Activated CD4-positive, alpha-beta T cell treated with anti-CD3 and anti-CD28 coated beads for 36 hours (primary cell): ENCODE measurements at regions of chr19 and their contacts with region 1.

Region 1: GRCh38 chr19:31349160-31349881 is at the start of gene TSHZ3:
- DNase-seq: peak; percentile 71
- ATAC-seq: peak; percentile 48
- H3K4me3 Mint-ChIP-seq: peak within 1 kb of the TSS; percentile 70
- H3K27ac Mint-ChIP-seq: no peak within 1 kb of the TSS
- H3K4me1 Mint-ChIP-seq: peaks cover 31% of the 10 kb centered on the region
- H3K27me3 Mint-ChIP-seq: peaks cover 50% of the 10 kb centered on the region
- total RNA-seq, gene TSHZ3: 0.85 to 1.6 TPM

Region 2: DNA sequence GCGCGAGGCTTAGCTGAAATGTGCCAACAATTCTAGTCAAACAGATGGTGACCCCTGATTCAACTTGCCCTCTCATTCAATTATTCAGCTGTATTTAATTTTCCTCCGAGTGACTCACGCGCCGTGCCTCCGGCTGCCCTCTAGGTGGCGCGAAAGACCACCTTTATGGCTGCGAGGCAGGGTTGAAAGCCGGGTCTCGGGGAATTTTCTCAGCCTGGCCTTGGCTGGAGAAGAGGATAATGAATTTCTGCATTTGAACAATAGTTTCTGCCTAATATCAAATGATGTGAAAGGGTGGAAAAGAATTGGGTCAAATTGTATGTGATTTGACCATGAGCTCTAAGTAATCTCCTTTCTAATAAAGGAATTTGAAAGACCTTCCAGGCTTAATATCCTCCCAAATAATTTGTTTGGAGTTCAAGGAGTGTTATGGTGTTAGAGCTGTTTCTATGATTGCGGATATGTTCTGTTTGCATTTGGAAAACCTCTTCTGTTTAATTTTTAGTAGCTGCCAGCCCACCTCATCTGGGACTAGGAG is 666.3 kb before region 1 on chr19:
- CTCF ChIA-PET with region 1: no interaction called
- POLR2A ChIA-PET with region 1: no interaction called
- intact Hi-C with region 1: loop called in 1 of 2 experiments (anchors 10 kb)
- DNase-seq: peak; percentile 76
- ATAC-seq: no peak
- H3K4me3 Mint-ChIP-seq: no peak overlapping the region
- H3K27ac Mint-ChIP-seq: no peak overlapping the region
- H3K4me1 Mint-ChIP-seq: no peaks in the 10 kb centered on the region
- H3K27me3 Mint-ChIP-seq: peaks cover 28% of the 10 kb centered on the region

Region 3: DNA sequence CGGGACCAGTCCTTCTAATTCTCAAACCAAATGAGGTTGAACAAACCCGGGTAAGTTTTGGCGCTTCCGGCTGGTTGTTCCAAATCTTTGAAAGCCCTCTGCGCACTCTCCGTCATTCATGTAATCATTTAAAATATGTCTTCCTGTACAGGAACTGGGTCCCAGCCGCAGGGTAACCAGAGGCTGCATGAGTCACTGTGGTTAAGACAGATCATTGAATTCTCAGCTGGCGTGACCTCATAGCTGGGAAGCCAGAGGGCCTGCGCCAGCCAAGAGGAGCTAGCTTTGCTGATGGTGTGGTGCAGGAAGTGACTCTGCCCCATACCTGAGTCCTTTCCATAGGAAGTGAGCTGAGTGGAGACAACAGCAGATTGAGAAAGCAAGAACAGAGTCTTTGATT is 135.2 kb before region 1 on chr19:
- CTCF ChIA-PET with region 1: no interaction called
- POLR2A ChIA-PET with region 1: no interaction called
- intact Hi-C with region 1: loop called (anchors 1 to 2 kb)
- DNase-seq: peak; percentile 96
- ATAC-seq: peak; percentile 94
- H3K4me3 Mint-ChIP-seq: peak overlapping the region; percentile 61
- H3K27ac Mint-ChIP-seq: peak overlapping the region; percentile 99
- H3K4me1 Mint-ChIP-seq: peaks cover 36% of the 10 kb centered on the region
- H3K27me3 Mint-ChIP-seq: no peaks in the 10 kb centered on the region

Region 4: GRCh38 chr19:31338069-31338776 is 11.1 kb before region 1 on chr19:
- CTCF ChIA-PET with region 1: interaction called, 4 read pairs
- POLR2A ChIA-PET with region 1: no interaction called
- intact Hi-C with region 1: loop called in 1 of 2 experiments (anchors 1 kb)
- DNase-seq: peak; percentile 57
- ATAC-seq: peak; percentile 64
- H3K4me3 Mint-ChIP-seq: no peak overlapping the region
- H3K27ac Mint-ChIP-seq: no peak overlapping the region
- H3K4me1 Mint-ChIP-seq: peaks cover 29% of the 10 kb centered on the region
- H3K27me3 Mint-ChIP-seq: peaks cover 6% of the 10 kb centered on the region